Calu3 (cell line): ENCODE measurements at regions of chr7 and their contacts with region 1.

Region 1: GRCh38 chr7:23181684-23182553 is at the start of gene NUP42:
- DNase-seq: peak; percentile 99
- H3K4me3 Mint-ChIP-seq: peak within 1 kb of the TSS; percentile 81
- H3K27ac Mint-ChIP-seq: peak within 1 kb of the TSS; percentile 90
- H3K4me1 Mint-ChIP-seq: peaks cover 26% of the 10 kb centered on the region
- H3K27me3 Mint-ChIP-seq: no peaks in the 10 kb centered on the region
- CTCF ChIP-seq: no peak
- total RNA-seq, gene NUP42: 62.8 TPM in 2 replicates

Region 2: GRCh38 chr7:22949944-22950343 is 232.0 kb before region 1 on chr7:
- CTCF ChIA-PET with region 1: no interaction called
- intact Hi-C with region 1: no loop called
- DNase-seq: no peak
- H3K4me3 Mint-ChIP-seq: no peak overlapping the region
- H3K27ac Mint-ChIP-seq: no peak overlapping the region
- H3K4me1 Mint-ChIP-seq: no peaks in the 10 kb centered on the region
- H3K27me3 Mint-ChIP-seq: no peaks in the 10 kb centered on the region
- CTCF ChIP-seq: no peak

Region 3: GRCh38 chr7:23105644-23106056 is 76.3 kb before region 1 on chr7 and contains the start of gene KLHL7:
- CTCF ChIA-PET with region 1: interaction called, 6 read pairs
- intact Hi-C with region 1: loop called (anchors 1 kb)
- DNase-seq: peak; percentile 99
- H3K4me3 Mint-ChIP-seq: peak within 1 kb of the TSS; percentile 99
- H3K27ac Mint-ChIP-seq: peak within 1 kb of the TSS; percentile 93
- H3K4me1 Mint-ChIP-seq: peaks cover 12% of the 10 kb centered on the region
- H3K27me3 Mint-ChIP-seq: peaks cover under 1% of the 10 kb centered on the region
- CTCF ChIP-seq: no peak
- total RNA-seq, gene KLHL7: 35.2 and 37.8 TPM in 2 replicates

Region 4: DNA sequence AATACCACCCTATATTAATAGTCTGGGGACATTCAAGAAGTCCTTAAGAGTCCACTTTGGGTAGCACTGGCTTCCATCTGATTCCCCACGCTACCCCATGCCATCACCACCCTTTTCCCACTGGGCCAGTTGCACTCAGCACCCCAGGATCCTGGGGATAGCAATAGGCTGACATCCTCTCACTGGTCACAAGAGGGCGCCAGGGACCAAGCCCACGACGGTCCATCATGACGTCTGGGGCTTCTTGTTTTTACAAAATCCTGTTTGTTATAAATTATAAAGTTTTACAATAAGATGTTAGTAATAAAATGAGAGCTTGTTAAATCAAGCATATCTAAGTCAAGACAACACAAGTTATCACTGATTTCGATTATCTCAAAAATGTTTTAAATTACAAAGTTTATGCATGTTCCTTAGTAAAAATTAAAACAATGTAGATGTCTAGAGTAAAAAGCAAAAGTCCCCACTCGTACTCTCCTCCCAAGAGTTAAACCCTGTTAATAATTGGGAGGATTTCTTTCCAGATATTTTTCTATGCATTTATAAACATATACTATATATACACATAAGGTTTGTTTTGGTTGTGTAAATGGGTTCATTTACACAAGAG is 80.0 kb after region 1 on chr7:
- CTCF ChIA-PET with region 1: no interaction called
- intact Hi-C with region 1: loop called (anchors 5 kb)
- DNase-seq: peak; percentile 83
- H3K4me3 Mint-ChIP-seq: no peak overlapping the region
- H3K27ac Mint-ChIP-seq: no peak overlapping the region
- H3K4me1 Mint-ChIP-seq: no peaks in the 10 kb centered on the region
- H3K27me3 Mint-ChIP-seq: peaks cover 31% of the 10 kb centered on the region
- CTCF ChIP-seq: peak; percentile 95

Region 5: DNA sequence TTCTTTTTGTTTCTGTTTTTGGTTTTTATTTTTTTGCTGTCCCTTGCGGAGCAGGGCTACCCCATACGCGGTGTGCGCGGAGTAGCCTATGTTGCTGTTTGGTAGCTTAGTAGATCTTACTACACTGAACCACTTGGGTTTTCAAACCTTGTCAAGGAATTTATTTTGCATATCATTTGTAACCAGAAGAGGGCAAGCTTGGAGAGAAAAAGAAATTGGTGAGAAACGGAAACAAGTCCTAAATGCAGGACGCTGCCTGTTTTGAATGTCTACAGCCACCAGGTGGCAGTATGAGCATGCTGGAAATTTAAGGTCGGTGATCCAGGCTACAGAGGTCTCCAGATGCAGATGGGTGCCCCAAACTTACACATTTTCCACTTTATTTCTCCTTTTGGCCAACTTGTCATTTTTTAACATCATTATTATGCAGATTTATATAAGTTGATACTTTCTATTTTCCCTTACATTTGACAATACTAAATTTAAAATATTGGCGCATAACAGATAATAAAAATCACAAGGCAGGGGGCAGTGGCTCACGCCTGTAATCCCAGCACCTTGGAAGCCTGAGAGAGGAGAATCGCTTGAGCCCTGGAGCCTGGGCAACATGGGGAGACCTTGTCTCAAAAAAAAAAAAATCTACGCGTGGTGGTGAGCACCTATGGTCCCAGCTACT is 365.1 kb after region 1 on chr7:
- CTCF ChIA-PET with region 1: no interaction called
- intact Hi-C with region 1: loop called (anchors 1 kb)
- DNase-seq: peak; percentile 87
- H3K4me3 Mint-ChIP-seq: no peak overlapping the region
- H3K27ac Mint-ChIP-seq: no peak overlapping the region
- H3K4me1 Mint-ChIP-seq: peaks cover 16% of the 10 kb centered on the region
- H3K27me3 Mint-ChIP-seq: no peaks in the 10 kb centered on the region
- CTCF ChIP-seq: peak; percentile 98